B cell (primary cell): ENCODE measurements at regions of chr1 and their contacts with region 1.

Region 1: DNA sequence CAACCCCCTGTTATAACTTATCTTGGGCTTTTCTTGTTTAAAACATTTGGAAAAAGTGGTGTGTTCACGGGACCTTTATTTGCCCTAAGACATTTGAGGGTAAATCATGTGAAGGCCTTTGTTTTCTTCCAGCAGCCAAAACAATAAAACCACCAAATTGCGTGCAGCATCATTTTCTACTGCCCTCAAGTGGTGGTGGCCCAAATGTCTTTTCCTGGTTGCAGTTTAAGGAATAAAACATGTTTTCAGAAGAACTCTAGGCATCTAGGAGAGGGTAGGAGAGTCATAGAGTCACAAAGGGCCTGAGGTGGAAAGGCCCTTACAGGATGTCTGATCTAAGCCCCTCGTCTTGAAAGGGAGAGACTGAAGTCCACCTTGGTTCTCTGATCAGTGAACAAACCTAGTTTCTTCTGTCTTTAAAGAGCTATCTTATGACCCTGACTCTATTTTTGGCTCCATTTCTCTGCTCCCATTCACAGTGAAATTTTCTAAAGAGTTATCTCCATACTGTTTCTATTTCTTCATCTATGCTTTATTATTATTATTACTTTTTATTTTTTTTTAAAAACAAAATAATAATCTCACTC is 16.0 kb upstream of the EPS15 start:
- DNase-seq: peak; percentile 59
- ATAC-seq: peak; percentile 43
- H3K4me3 ChIP-seq: no peak overlapping the region
- H3K4me3 Mint-ChIP-seq: no peak overlapping the region
- H3K27ac ChIP-seq: no peak overlapping the region
- H3K27ac Mint-ChIP-seq: peak overlapping the region; percentile 39
- H3K4me1 ChIP-seq: peaks cover 0 to 8% of the 10 kb centered on the region in 2 donors
- H3K4me1 Mint-ChIP-seq: peaks cover 14% of the 10 kb centered on the region
- H3K27me3 ChIP-seq: no peaks in the 10 kb centered on the region
- H3K27me3 Mint-ChIP-seq: no peaks in the 10 kb centered on the region
- CTCF ChIP-seq: peak; percentile 70

Region 2: DNA sequence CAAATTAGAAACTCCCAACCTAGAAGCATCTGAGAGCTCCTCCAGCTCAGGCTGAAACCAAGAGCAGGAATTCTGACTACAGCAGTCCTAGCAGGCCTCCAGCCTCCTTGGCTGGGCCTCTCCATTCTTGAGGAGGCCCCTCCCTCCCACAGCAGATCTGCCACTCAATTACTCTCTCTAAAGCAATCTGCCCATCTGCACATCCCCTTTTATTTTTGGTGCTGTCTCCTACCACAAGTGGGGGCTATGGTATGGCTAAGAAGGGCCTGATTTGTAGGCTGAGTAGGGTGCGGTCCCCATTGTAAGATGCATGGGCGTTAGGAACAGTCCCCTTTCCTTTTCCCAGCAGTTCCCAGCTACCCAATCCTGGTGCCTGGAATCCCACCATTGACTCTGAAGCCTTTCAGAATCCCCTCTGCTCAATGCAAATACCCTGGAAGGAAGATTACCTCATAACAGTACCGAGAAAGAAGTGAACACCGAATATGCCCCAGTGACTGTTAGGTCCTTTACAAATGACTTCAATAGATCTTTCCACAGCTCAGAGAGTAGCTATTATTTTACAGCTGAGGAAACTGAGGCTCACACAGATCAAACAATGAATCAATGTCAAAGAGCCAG is 193.1 kb before region 1 on chr1:
- CTCF ChIA-PET with region 1: interaction called, 3 read pairs
- POLR2A ChIA-PET with region 1: no interaction called
- intact Hi-C with region 1: loop called (anchors 1 kb)
- DNase-seq: peak; percentile 21
- ATAC-seq: peak; percentile 47
- H3K4me3 ChIP-seq: no peak overlapping the region
- H3K4me3 Mint-ChIP-seq: no peak overlapping the region
- H3K27ac ChIP-seq: no peak overlapping the region
- H3K27ac Mint-ChIP-seq: no peak overlapping the region
- H3K4me1 ChIP-seq: peaks cover 6 to 10% of the 10 kb centered on the region in 2 donors
- H3K4me1 Mint-ChIP-seq: peaks cover 12% of the 10 kb centered on the region
- H3K27me3 ChIP-seq: peaks cover 0 to 36% (median 18%) of the 10 kb centered on the region in 4 experiments
- H3K27me3 Mint-ChIP-seq: peaks cover 40% of the 10 kb centered on the region
- CTCF ChIP-seq: no peak

Region 3: GRCh38 chr1:51445351-51446090 is 89.6 kb before region 1 on chr1:
- CTCF ChIA-PET with region 1: interaction called, 11 read pairs
- POLR2A ChIA-PET with region 1: no interaction called
- intact Hi-C with region 1: no loop called
- DNase-seq: no peak
- ATAC-seq: no peak
- H3K4me3 ChIP-seq: no peak overlapping the region
- H3K4me3 Mint-ChIP-seq: no peak overlapping the region
- H3K27ac ChIP-seq: no peak overlapping the region
- H3K27ac Mint-ChIP-seq: no peak overlapping the region
- H3K4me1 ChIP-seq: no peaks in the 10 kb centered on the region
- H3K4me1 Mint-ChIP-seq: peaks cover 12% of the 10 kb centered on the region
- H3K27me3 ChIP-seq: no peaks in the 10 kb centered on the region
- H3K27me3 Mint-ChIP-seq: no peaks in the 10 kb centered on the region
- CTCF ChIP-seq: no peak

Region 4: DNA sequence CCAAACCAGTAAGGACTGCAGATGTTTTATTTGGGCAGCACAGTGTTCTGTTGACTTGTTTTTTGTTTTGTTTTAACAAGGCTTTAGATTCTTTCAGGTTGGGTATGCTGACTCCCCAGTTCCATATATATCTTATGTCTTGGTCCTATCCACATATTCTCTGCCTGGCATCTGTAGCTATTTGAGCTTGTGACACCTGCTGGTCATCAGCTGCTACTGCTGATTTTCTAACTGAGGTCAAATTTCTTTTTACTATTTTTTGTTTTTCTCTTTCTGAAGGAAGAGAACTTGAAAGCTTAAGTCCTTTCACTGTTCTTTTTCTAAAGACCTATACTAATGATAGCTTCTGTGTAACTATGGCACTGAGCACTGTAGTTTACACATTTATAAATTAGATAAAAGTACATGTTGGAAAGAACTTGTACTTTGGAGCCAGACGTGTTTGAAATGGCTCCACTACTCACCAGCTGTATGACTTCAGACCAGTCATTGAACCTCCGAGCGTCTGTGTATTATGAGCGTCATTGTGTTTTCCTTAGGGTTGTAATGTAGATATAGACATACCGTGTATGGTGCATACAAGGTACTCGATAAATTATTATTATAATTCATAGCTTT is 234.0 kb after region 1 on chr1:
- CTCF ChIA-PET with region 1: interaction called, 12 read pairs
- POLR2A ChIA-PET with region 1: no interaction called
- intact Hi-C with region 1: no loop called
- DNase-seq: peak; percentile 63
- ATAC-seq: peak; percentile 54
- H3K4me3 ChIP-seq: no peak overlapping the region
- H3K4me3 Mint-ChIP-seq: no peak overlapping the region
- H3K27ac ChIP-seq: no peak overlapping the region
- H3K27ac Mint-ChIP-seq: no peak overlapping the region
- H3K4me1 ChIP-seq: no peaks in the 10 kb centered on the region
- H3K4me1 Mint-ChIP-seq: peaks cover 13% of the 10 kb centered on the region
- H3K27me3 ChIP-seq: no peaks in the 10 kb centered on the region
- H3K27me3 Mint-ChIP-seq: no peaks in the 10 kb centered on the region
- CTCF ChIP-seq: peak; percentile 94